Activated CD8-positive, alpha-beta T cell treated with anti-CD3 and anti-CD28 coated beads, Interleukin-2, amount 10 ng/mL, durations not matched to agents 7 days and 5 days (primary cell): ENCODE measurements at regions of chr7 and their contacts with region 1.

Region 1: GRCh38 chr7:132580717-132581285 is 4.5 kb upstream of the PLXNA4 start:
- DNase-seq: peak; percentile 89
- ATAC-seq: peak; percentile 78
- H3K4me3 Mint-ChIP-seq: no peak overlapping the region
- H3K27ac Mint-ChIP-seq: no peak overlapping the region
- H3K4me1 Mint-ChIP-seq: peaks cover 30% of the 10 kb centered on the region
- H3K27me3 Mint-ChIP-seq: peaks cover 38% of the 10 kb centered on the region

Region 2: DNA sequence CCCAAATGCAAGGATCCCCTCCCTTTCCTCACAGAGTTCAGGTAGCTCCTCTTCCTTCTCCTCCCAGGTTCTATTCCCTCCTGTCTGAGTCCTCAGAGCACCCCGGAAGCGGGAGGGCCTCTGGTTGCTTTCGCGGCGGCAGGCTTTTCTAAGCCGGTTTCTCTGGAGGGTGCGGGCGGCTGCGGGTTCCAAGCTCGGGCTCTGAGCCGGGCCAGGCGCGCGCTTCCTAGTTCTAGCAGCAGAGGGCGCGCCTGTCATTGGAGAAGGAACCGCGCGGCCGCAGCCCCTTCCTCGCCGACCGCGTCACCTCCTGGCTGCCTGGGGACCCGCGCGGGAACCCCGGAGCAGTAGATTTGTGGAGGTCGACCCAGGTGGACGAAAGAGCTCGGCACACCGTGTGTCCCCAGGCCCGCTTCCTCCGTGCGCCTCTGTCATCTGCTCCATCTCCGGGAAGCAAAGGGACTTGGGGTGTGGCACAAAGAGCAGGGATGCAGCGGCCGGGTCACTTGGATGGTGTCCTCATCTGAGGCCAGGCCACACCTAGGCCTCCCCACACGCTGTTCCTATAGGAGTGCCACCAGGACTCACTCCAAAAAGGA is 635.4 kb before region 1 on chr7:
- CTCF ChIA-PET with region 1: interaction called, 12 read pairs
- POLR2A ChIA-PET with region 1: no interaction called
- DNase-seq: peak; percentile 60
- ATAC-seq: peak; percentile 88
- H3K4me3 Mint-ChIP-seq: no peak overlapping the region
- H3K27ac Mint-ChIP-seq: no peak overlapping the region
- H3K4me1 Mint-ChIP-seq: no peaks in the 10 kb centered on the region
- H3K27me3 Mint-ChIP-seq: peaks cover 6% of the 10 kb centered on the region

Region 3: GRCh38 chr7:132386201-132386681 is 194.6 kb before region 1 on chr7:
- CTCF ChIA-PET with region 1: interaction called, 312 read pairs
- POLR2A ChIA-PET with region 1: no interaction called
- DNase-seq: no peak
- ATAC-seq: no peak
- H3K4me3 Mint-ChIP-seq: no peak overlapping the region
- H3K27ac Mint-ChIP-seq: no peak overlapping the region
- H3K4me1 Mint-ChIP-seq: peaks cover 6% of the 10 kb centered on the region
- H3K27me3 Mint-ChIP-seq: peaks cover 34% of the 10 kb centered on the region

Region 4: GRCh38 chr7:132451161-132451560 is 129.6 kb before region 1 on chr7:
- CTCF ChIA-PET with region 1: interaction called, 18 read pairs
- POLR2A ChIA-PET with region 1: no interaction called
- DNase-seq: peak; percentile 75
- ATAC-seq: peak; percentile 71
- H3K4me3 Mint-ChIP-seq: peak overlapping the region; percentile 4
- H3K27ac Mint-ChIP-seq: peak overlapping the region; percentile 84
- H3K4me1 Mint-ChIP-seq: peaks cover 98% of the 10 kb centered on the region
- H3K27me3 Mint-ChIP-seq: no peaks in the 10 kb centered on the region

Region 5: GRCh38 chr7:132557489-132558044 is 23.2 kb before region 1 on chr7:
- CTCF ChIA-PET with region 1: interaction called, 22 read pairs
- POLR2A ChIA-PET with region 1: interaction called, 3 read pairs
- DNase-seq: no peak
- ATAC-seq: peak; percentile 39
- H3K4me3 Mint-ChIP-seq: no peak overlapping the region
- H3K27ac Mint-ChIP-seq: peak overlapping the region; percentile 10
- H3K4me1 Mint-ChIP-seq: peaks cover 58% of the 10 kb centered on the region
- H3K27me3 Mint-ChIP-seq: peaks cover 21% of the 10 kb centered on the region

Region 6: DNA sequence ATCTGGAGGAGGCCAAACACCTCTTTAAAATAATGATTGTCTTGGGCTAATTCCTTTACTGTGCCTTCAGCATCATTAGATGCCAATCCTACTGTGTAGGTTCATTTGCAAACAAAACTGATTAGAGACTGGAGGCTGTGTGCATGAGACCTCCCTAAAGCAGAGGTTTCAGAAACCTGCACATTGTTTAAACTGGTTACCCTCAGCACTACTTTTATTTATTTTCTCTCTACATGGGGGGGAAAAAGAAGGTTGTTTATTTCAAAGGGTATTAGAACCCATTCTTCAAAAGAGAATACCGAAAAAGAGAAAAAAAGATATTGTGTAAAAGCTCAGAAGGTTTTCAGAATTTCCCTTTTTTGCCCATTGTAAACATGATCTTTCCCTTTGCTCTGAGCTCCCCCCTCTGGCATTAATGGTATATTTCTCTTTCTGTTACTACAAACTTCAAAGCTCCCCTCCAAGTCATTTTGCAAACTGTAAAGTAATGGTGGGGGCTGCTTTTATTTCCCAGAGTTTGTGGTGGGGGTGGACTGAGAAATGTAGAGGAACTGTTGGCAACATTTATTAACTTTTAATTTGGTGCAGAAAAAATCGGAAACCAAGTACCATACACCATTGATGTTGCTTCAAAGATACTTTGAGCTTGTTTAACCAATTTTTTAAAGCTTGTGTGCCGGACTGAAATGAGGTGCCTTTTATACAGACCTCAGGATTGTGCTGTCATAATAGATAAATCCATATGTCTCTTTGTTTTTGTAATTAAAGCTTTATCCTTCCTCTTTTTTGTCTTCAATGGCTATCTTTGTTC is 853.5 kb after region 1 on chr7:
- CTCF ChIA-PET with region 1: interaction called, 16 read pairs
- POLR2A ChIA-PET with region 1: no interaction called
- DNase-seq: no peak
- ATAC-seq: no peak
- H3K4me3 Mint-ChIP-seq: no peak overlapping the region
- H3K27ac Mint-ChIP-seq: no peak overlapping the region
- H3K4me1 Mint-ChIP-seq: no peaks in the 10 kb centered on the region
- H3K27me3 Mint-ChIP-seq: no peaks in the 10 kb centered on the region